ENCODE measurements at regions of chr1 and their contacts with region 1.

Region 1: DNA sequence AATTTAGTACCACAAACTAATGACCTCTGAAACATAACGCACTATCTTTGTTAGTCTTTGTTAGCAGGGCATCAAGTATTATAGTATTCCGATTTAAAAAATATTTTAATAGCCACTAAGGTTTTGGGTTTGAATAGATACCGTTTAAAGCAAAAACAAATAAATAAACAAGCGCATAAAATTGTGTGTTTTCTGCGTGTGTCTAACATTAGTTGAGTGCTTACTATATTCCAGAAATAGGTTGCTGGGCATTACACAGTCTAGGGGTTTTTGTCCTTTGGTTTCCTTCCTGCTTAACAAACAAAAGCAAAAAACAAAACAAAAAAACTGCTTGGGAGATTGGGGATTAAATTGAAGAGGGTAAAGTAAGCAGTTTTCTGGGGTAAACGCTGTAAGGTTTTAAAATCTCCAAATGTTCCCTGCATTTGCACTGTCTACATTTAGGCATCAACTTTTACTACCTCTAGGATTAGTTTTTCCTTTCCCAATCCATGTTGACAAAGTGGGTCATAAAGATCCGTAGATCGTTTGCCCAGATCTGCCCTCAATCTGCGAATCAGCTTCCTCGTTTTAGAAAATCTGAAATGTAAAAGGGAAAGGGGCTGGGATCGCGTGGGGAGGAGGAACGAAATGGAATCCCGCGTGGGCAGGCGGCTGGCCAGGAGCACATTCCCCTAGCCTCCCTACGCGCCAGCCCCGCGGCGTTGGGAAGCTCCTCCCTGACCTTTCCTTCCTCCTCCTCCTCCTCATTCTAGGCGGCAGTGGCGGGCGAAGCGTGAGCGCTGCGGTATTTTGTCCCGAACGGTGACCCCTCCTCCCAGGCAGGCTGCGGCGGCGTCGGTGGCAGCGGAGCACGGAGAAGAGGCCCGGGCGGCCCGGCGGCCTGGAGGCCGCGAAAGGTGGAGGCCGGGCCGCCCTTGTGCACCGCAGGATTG is at the start of gene KCTD3:
- DNase-seq: no peak
- H3K4me3 ChIP-seq: peak within 1 kb of the TSS; percentile 81 to 93 (median 90)
- H3K27ac ChIP-seq: peak within 1 kb of the TSS; percentile 93 to 95 (median 94)
- H3K4me1 ChIP-seq: peaks cover 22 to 38% (median 35%) of the 10 kb centered on the region in 4 donors
- H3K27me3 ChIP-seq: no peaks in the 10 kb centered on the region
- CTCF ChIP-seq: no peak
- EP300 ChIP-seq: no peak
- POLR2A ChIP-seq: no peak
- total RNA-seq, gene KCTD3: 61.0 to 80.5 (median 65.2) TPM

Region 2: DNA sequence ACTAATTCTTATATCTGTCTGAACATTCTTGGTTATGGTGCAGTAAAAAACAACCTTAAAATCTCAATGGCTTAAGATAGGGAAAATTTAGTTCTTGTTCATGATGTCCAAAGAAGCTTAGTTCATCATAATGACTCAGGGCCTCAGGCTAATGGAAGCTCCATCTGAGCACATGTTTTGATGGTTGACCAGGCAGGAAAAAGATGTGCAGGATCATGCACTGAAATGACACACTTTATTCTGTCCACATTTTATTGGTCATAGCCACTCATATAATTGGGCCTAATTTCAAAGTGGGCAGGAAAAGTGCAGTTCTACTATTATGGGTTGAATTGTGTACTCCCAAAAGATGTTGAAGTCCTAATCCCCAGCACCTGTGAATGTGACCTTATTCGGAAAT is 765.6 kb before region 1 on chr1:
- intact Hi-C with region 1: no loop called
- DNase-seq: no peak
- H3K4me3 ChIP-seq: no peak overlapping the region
- H3K27ac ChIP-seq: no peak overlapping the region
- H3K4me1 ChIP-seq: no peaks in the 10 kb centered on the region
- H3K27me3 ChIP-seq: no peaks in the 10 kb centered on the region
- CTCF ChIP-seq: no peak
- EP300 ChIP-seq: no peak
- POLR2A ChIP-seq: no peak

Region 3: GRCh38 chr1:215547011-215547410 is 19.8 kb before region 1 on chr1:
- intact Hi-C with region 1: no loop called
- DNase-seq: no peak
- H3K4me3 ChIP-seq: no peak overlapping the region
- H3K27ac ChIP-seq: no peak overlapping the region
- H3K4me1 ChIP-seq: no peaks in the 10 kb centered on the region
- H3K27me3 ChIP-seq: no peaks in the 10 kb centered on the region
- CTCF ChIP-seq: no peak
- EP300 ChIP-seq: no peak
- POLR2A ChIP-seq: no peak

Region 4: DNA sequence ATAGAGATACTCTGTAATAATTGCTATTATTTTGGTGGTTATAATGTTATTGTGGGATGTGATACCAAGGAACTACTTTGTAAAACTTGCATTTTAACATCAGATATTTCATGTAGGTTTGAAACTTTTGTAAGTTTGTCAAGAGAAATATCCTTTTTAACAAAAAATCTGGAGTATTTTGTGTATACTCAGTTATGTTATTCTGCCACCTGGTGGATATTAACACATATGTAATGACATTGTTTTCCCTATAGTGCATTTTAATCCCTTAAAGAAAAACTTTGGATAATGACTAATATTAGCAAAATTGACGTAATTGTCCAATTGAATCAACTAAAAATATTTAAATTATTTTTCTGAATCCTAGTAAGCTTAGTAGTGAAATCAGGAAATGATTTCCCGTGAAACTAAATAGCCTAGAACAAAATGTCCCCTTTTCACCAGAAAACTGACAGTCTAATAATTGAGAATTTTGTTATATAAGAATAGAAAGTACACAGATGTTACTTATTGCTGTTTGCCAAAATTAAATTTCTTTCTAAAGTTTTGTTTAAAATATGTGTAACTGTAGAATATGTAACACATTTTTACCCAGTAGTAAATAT is 39.8 kb after region 1 on chr1:
- intact Hi-C with region 1: loop called (anchors 5 kb)
- DNase-seq: no peak
- H3K4me3 ChIP-seq: no peak overlapping the region
- H3K27ac ChIP-seq: no peak overlapping the region
- H3K4me1 ChIP-seq: peaks cover 0 to 28% (median 25%) of the 10 kb centered on the region in 4 donors
- H3K27me3 ChIP-seq: no peaks in the 10 kb centered on the region
- CTCF ChIP-seq: peak; percentile 34 to 52 (median 48)
- EP300 ChIP-seq: no peak
- POLR2A ChIP-seq: no peak

Measured in esophagus muscularis mucosa (tissue), 4 donors.